Gastrocnemius medialis (tissue), 4 donors: ENCODE measurements at regions of chr2 and their contacts with region 1.

Region 1: GRCh38 chr2:27102329-27102728 is 15.8 kb downstream of the KHK start:
- DNase-seq: no peak
- ATAC-seq: no peak
- H3K4me3 ChIP-seq: no peak overlapping the region
- H3K27ac ChIP-seq: no peak overlapping the region
- H3K4me1 ChIP-seq: no peaks in the 10 kb centered on the region
- H3K27me3 ChIP-seq: no peaks in the 10 kb centered on the region
- CTCF ChIP-seq: no peak
- POLR2A ChIP-seq: no peak

Region 2: GRCh38 chr2:27185331-27186026 is 83.2 kb after region 1 on chr2:
- in situ Hi-C with region 1: loop called in 3 of 4 experiments (anchors 5 to 10 kb)
- intact Hi-C with region 1: no loop called
- DNase-seq: peak; percentile 71 to 79
- ATAC-seq: peak; percentile 92 to 94
- H3K4me3 ChIP-seq: no peak overlapping the region
- H3K27ac ChIP-seq: peak overlapping the region; percentile 73 to 93 (median 82)
- H3K4me1 ChIP-seq: peaks cover 29 to 41% of the 10 kb centered on the region in 2 donors
- H3K27me3 ChIP-seq: no peaks in the 10 kb centered on the region
- CTCF ChIP-seq: no peak
- POLR2A ChIP-seq: no peak

Region 3: GRCh38 chr2:27191053-27191829 is 88.9 kb after region 1 on chr2:
- in situ Hi-C with region 1: loop called in 3 of 4 experiments (anchors 5 to 10 kb)
- intact Hi-C with region 1: loop called (anchors 1 kb)
- DNase-seq: peak in 1 of 2 donors; percentile 36
- ATAC-seq: peak; percentile 80 to 82
- H3K4me3 ChIP-seq: no peak overlapping the region
- H3K27ac ChIP-seq: no peak overlapping the region
- H3K4me1 ChIP-seq: peaks cover under 1 to 15% of the 10 kb centered on the region in 2 donors
- H3K27me3 ChIP-seq: no peaks in the 10 kb centered on the region
- CTCF ChIP-seq: peak; percentile 43 to 74 (median 66)
- POLR2A ChIP-seq: no peak

Region 4: DNA sequence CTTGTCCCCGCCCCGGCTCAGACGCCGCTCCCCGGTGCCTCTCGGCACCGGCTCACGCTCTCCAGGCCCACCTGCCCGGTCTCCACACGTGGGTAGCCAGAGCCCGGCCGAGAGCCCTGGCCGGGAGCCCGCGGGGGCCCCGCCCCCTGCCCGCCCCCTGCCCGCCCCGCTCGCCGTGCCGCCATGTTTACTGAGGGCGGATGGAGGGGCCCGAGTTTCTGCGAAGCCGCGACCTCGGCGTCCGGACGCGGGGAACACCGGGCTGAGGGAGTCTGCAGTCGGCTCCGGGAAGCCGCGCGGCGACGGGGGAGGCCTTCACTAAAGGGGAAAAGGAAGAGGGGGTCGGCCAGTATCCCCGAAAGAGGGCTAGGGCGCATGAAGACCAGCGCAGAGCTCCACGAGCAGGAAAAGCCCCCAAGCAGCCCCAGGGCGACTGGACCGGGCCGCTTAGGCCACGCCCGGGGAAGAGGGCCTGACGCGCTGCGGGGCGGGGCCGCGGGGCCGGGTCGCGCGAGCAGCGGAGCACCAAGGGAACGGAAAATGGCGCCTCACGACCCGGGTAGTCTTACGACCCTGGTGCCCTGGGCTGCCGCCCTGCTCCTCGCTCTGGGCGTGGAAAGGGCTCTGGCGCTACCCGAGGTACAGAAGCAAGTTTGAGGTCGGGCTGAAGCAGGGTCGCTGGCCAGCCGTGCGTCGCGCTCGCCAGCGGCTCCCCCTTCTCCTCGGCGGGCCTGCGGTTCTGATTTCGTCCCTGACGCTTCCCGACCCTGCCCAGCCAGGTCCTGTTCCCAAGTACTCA is 109.7 kb after region 1 on chr2 and contains the starts of genes ATRAID and SLC5A6:
- in situ Hi-C with region 1: no loop called
- intact Hi-C with region 1: no loop called
- DNase-seq: peak; percentile 81 to 84
- ATAC-seq: peak; percentile 90 to 92
- H3K4me3 ChIP-seq: peak within 1 kb of the TSS; percentile 83 to 94 (median 87)
- H3K27ac ChIP-seq: peak within 1 kb of the TSS; percentile 94 to 99 (median 98)
- H3K4me1 ChIP-seq: peaks cover 15 to 18% of the 10 kb centered on the region in 2 donors
- H3K27me3 ChIP-seq: no peaks in the 10 kb centered on the region
- CTCF ChIP-seq: no peak
- POLR2A ChIP-seq: peak; percentile 87 to 89
- total RNA-seq, gene ATRAID: 131 to 203 (median 171) TPM
- total RNA-seq, gene SLC5A6: 19.0 to 46.5 (median 32.5) TPM

Region 5: GRCh38 chr2:27271631-27272340 is 169.5 kb after region 1 on chr2:
- in situ Hi-C with region 1: loop called in 1 of 4 experiments (anchors 10 kb)
- intact Hi-C with region 1: no loop called
- DNase-seq: no peak
- ATAC-seq: no peak
- H3K4me3 ChIP-seq: no peak overlapping the region
- H3K27ac ChIP-seq: no peak overlapping the region
- H3K4me1 ChIP-seq: no peaks in the 10 kb centered on the region
- H3K27me3 ChIP-seq: peaks cover 0 to 5% (median 3%) of the 10 kb centered on the region in 3 donors
- CTCF ChIP-seq: no peak
- POLR2A ChIP-seq: no peak